ENCODE measurements at regions of chr11 and their contacts with region 1.

Region 1: DNA sequence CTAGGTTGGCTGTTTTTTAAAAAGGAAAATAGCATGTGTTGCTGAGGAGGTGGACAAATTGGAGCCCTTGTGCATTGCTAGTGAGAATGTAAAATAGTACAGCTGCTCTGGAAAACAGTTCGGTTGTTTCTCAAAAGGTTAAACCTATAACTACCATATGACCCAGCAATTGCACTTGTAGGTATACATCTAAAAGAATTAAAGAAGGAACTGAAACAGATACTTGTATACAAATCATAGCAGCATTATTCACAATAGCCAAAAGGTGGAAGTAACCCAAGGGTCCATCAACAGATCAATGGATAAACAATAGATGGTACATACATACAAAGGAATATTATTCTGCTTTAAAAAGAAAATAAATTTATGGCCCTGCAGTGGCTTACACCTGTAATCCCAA is 111.4 kb downstream of the CSTPP1 start:
- DNase-seq: no peak
- ATAC-seq: no peak
- H3K4me3 ChIP-seq: no peak overlapping the region
- H3K4me3 Mint-ChIP-seq: no peak overlapping the region
- H3K27ac ChIP-seq: no peak overlapping the region
- H3K27ac Mint-ChIP-seq: no peak overlapping the region
- H3K4me1 ChIP-seq: no peaks in the 10 kb centered on the region
- H3K4me1 Mint-ChIP-seq: peaks cover 3% of the 10 kb centered on the region
- H3K27me3 ChIP-seq: no peaks in the 10 kb centered on the region
- H3K27me3 Mint-ChIP-seq: no peaks in the 10 kb centered on the region
- CTCF ChIP-seq: no peak

Region 2: GRCh38 chr11:47035108-47035507 is 12.9 kb before region 1 on chr11:
- CTCF ChIA-PET with region 1: no interaction called
- POLR2A ChIA-PET with region 1: no interaction called
- intact Hi-C with region 1: loop called (anchors 1 kb)
- DNase-seq: no peak
- ATAC-seq: no peak
- H3K4me3 ChIP-seq: no peak overlapping the region
- H3K4me3 Mint-ChIP-seq: no peak overlapping the region
- H3K27ac ChIP-seq: no peak overlapping the region
- H3K27ac Mint-ChIP-seq: no peak overlapping the region
- H3K4me1 ChIP-seq: no peaks in the 10 kb centered on the region
- H3K4me1 Mint-ChIP-seq: no peaks in the 10 kb centered on the region
- H3K27me3 ChIP-seq: no peaks in the 10 kb centered on the region
- H3K27me3 Mint-ChIP-seq: no peaks in the 10 kb centered on the region
- CTCF ChIP-seq: no peak

Region 3: DNA sequence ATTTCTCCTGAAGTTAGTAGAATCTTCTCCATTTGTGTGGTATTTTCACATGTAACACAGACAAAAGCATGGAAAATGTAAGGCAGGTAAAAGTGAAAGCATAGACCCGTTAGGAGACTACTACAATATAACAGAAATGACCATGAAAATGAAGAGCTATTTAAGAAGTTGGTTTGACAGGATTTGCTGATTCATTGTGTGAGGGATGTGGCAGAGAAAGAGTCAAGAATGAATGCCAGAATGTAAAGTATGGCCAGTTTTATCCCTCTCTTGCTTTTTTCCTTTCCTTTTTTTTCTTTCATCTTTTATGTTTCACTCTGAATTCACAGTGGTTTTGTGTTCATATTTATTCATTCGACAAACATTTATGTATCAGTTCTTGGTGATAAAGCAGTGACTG is 12.8 kb after region 1 on chr11:
- CTCF ChIA-PET with region 1: no interaction called
- POLR2A ChIA-PET with region 1: no interaction called
- intact Hi-C with region 1: no loop called
- DNase-seq: no peak
- ATAC-seq: no peak
- H3K4me3 ChIP-seq: no peak overlapping the region
- H3K4me3 Mint-ChIP-seq: no peak overlapping the region
- H3K27ac ChIP-seq: no peak overlapping the region
- H3K27ac Mint-ChIP-seq: no peak overlapping the region
- H3K4me1 ChIP-seq: no peaks in the 10 kb centered on the region
- H3K4me1 Mint-ChIP-seq: no peaks in the 10 kb centered on the region
- H3K27me3 ChIP-seq: no peaks in the 10 kb centered on the region
- H3K27me3 Mint-ChIP-seq: no peaks in the 10 kb centered on the region
- CTCF ChIP-seq: no peak